Activated CD8-positive, alpha-beta T cell treated with anti-CD3 and anti-CD28 coated beads for 36 hours (primary cell): ENCODE measurements at regions of chr9 and their contacts with region 1.

Region 1: DNA sequence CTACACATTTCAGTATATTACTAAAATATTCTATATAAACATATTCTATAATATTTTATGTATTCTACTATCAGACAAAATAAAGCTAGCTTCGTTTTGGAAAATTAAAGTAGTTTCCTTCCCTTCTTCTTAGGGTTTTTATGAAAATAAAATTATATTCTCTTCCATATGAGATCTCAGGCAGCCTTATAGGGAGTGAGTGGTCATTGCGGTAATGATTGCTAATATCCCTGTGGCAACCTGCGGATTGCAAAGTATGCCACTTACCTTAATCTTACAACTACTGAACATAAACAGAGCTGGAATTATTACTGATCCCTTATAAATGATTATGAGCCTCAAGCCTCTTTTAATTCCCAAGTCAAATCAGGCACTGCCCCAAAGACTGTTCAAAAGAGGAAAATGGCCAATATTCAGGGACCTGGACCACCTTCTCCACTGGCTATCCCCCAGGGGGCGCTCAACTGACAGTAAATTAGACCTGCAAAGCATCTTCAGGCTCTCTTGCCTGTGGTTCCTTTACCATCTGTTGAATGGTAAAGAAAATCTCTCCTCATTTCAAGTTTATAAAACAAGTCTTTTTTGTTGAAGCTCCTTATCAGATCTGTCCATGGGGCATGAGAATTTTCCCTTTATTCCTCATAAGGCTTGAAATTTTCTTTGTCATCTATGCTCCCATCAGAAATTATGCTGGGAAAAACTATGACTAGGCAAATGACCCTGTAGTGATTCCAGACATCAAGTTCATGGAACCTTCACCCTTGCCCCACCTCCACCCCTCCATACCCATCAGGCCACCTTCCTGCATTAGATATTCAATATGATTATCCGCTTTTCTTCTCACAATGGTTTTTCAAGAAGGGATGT is 163.9 kb downstream of the CEMIP2 start:
- DNase-seq: peak; percentile 85
- ATAC-seq: peak; percentile 79
- H3K4me3 Mint-ChIP-seq: no peak overlapping the region
- H3K27ac Mint-ChIP-seq: no peak overlapping the region
- H3K4me1 Mint-ChIP-seq: no peaks in the 10 kb centered on the region
- H3K27me3 Mint-ChIP-seq: no peaks in the 10 kb centered on the region
- CTCF ChIP-seq: peak; percentile 89

Region 2: DNA sequence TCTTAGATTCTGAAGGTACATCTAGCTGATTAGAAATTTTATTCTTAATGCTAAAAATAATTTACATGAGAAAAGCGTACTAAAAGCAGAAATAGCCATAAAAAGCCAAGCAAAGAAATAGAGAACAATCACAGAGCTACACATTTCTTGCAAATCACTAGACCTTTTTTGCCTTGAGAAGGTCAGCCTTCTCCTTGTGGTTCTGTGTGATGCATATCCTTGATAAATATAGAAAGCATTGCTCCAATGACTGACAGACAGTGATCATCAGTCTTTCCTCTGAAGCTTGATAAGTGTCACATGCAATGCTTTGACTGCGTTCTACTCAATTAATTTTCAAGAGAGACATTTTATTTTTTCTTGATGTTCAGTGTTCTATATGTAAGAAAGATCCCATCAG is 63.0 kb before region 1 on chr9:
- CTCF ChIA-PET with region 1: no interaction called
- POLR2A ChIA-PET with region 1: no interaction called
- intact Hi-C with region 1: no loop called
- DNase-seq: no peak
- ATAC-seq: no peak
- H3K4me3 Mint-ChIP-seq: no peak overlapping the region
- H3K27ac Mint-ChIP-seq: no peak overlapping the region
- H3K4me1 Mint-ChIP-seq: no peaks in the 10 kb centered on the region
- H3K27me3 Mint-ChIP-seq: peaks cover 9% of the 10 kb centered on the region
- CTCF ChIP-seq: no peak

Region 3: GRCh38 chr9:71592400-71592799 is 12.0 kb before region 1 on chr9:
- CTCF ChIA-PET with region 1: interaction called, 15 read pairs
- POLR2A ChIA-PET with region 1: no interaction called
- intact Hi-C with region 1: no loop called
- DNase-seq: no peak
- ATAC-seq: no peak
- H3K4me3 Mint-ChIP-seq: no peak overlapping the region
- H3K27ac Mint-ChIP-seq: no peak overlapping the region
- H3K4me1 Mint-ChIP-seq: no peaks in the 10 kb centered on the region
- H3K27me3 Mint-ChIP-seq: peaks cover 5% of the 10 kb centered on the region
- CTCF ChIP-seq: no peak

Region 4: GRCh38 chr9:71683598-71684235 is 79.3 kb after region 1 on chr9:
- CTCF ChIA-PET with region 1: interaction called, 15 read pairs
- POLR2A ChIA-PET with region 1: no interaction called
- intact Hi-C with region 1: no loop called
- DNase-seq: no peak
- ATAC-seq: no peak
- H3K4me3 Mint-ChIP-seq: no peak overlapping the region
- H3K27ac Mint-ChIP-seq: peak overlapping the region; percentile 67
- H3K4me1 Mint-ChIP-seq: peaks cover 47% of the 10 kb centered on the region
- H3K27me3 Mint-ChIP-seq: no peaks in the 10 kb centered on the region
- CTCF ChIP-seq: no peak

Region 5: DNA sequence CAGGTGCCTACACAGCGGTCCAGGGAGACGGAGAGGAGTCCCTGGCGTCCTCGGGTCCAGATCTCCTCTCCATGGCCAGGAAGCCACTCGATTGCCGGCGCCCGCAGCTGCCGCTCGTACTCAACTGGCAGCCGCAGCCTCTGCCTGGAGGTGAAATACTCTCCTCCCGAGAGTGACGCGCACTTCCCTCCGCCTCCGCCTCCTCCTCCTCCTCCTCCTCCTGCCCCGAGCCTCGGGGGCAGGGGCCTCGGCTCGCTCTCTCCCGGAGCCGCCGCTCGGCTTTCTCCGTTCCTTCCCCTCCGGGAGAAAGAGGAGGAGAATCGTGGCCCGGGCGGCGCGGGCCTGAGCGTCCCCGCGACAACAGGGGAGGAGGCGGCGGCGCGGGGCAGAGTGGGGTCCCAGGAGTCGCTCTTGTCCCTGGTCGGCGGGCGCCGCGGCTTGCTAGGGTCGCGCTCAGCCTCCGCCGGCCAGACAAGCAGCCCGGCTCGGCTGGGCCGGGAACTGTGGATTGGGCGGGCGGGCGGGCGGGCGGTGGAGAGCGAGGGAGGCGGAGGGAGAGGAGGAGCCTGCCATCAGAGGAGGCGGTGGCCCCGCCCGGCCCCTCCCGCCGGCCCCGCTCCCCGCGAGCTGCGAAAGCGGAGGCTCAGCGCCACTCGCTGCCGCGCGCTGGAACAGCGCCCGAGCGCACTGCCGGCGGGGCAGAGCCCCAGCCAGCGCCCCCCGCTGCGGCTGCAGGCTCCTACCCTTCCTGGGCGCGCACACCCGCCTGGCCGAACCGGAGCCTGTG is 164.2 kb after region 1 on chr9 and contains the start of gene CEMIP2:
- CTCF ChIA-PET with region 1: interaction called, 17 read pairs
- POLR2A ChIA-PET with region 1: interaction called, 3 read pairs
- intact Hi-C with region 1: loop called (anchors 1 kb)
- DNase-seq: peak; percentile 91
- ATAC-seq: peak; percentile 78
- H3K4me3 Mint-ChIP-seq: peak within 1 kb of the TSS; percentile 98
- H3K27ac Mint-ChIP-seq: peak within 1 kb of the TSS; percentile 96
- H3K4me1 Mint-ChIP-seq: peaks cover 34% of the 10 kb centered on the region
- H3K27me3 Mint-ChIP-seq: no peaks in the 10 kb centered on the region
- CTCF ChIP-seq: no peak
- total RNA-seq, gene CEMIP2: 58.7 to 63.5 TPM

Region 6: GRCh38 chr9:72022841-72023240 is 418.4 kb after region 1 on chr9:
- CTCF ChIA-PET with region 1: interaction called, 8 read pairs
- POLR2A ChIA-PET with region 1: no interaction called
- intact Hi-C with region 1: loop called (anchors 10 kb)
- DNase-seq: no peak
- ATAC-seq: no peak
- H3K4me3 Mint-ChIP-seq: no peak overlapping the region
- H3K27ac Mint-ChIP-seq: no peak overlapping the region
- H3K4me1 Mint-ChIP-seq: no peaks in the 10 kb centered on the region
- H3K27me3 Mint-ChIP-seq: no peaks in the 10 kb centered on the region
- CTCF ChIP-seq: no peak